ENCODE measurements at regions of chr3 and their contacts with region 1.

Region 1: DNA sequence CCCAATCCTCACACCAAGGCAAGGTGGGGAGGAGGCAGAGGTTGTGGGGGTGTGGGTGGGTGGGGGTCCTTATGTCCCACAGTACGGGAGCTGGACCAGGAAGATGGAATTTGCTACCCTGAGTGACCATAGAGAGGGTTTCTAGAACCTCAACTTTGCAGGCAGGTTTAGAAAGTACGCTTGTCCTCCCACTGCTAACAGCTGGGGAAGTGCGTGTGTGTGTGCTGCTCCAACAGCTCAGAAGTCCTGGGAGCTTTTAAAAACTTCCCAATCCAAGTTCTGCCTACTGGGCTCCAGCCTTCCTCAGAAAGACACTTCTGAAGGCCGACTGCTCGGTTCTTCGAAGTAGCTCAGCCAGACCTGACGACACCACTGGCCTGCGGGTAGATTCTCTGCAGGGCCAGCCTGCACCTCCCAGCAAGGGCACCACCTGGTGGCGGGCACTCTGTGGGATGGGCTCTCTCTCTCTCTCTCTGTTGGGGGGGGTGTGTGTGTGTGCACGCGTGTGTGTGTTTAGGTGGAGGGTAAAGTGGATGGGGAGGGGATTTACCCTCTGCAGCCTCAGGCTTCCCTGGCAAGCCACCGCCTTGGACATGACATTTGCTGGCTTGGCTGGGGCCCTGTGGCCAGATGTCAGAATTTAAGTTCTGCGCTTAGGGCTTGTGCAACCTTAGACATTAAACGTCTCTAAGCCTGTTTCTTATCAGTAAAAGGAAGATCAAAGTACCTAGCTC is 15.6 kb downstream of the TMEM158 start:
- DNase-seq: peak; percentile 79
- H3K4me3 Mint-ChIP-seq: no peak overlapping the region
- H3K27ac Mint-ChIP-seq: no peak overlapping the region
- H3K4me1 Mint-ChIP-seq: peaks cover 14% of the 10 kb centered on the region
- H3K27me3 Mint-ChIP-seq: no peaks in the 10 kb centered on the region
- CTCF ChIP-seq: peak; percentile 91

Region 2: DNA sequence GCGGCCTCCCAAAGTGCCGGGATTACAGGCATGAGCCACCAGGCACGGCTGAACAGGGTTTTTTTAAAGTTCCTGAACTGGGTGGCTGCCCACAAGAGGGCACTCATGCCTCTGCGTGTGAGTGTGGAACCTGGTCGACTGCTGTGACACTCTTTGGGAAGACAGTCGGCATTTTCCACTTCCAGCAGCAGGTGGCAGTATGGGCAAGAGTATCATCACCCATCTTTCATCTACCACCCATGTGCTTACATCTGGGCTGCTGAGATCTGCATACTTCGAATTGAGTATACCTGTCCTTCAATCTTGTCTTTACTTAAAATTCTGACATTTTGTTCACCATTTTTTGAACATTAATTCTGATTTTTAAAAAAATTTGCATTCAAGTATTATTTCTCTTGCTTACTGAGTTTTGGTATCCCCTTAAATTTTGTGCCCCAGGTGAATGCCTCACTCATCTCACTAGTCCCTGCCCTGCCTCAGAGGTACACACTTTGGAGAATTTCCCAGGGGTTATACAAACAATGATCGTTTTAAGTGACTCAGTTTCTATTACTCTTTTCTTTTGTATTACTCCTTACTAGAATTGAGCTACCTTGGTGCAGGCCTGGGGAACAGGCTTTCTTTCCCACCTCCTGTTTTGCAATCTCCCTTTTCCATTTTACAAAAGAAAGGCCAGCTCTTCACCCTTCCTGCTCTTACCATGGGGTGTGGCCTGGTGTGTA is 172.6 kb before region 1 on chr3:
- CTCF ChIA-PET with region 1: interaction called, 368 read pairs
- POLR2A ChIA-PET with region 1: interaction called, 23 read pairs
- intact Hi-C with region 1: loop called (anchors 1 kb)
- DNase-seq: peak; percentile 97
- H3K4me3 Mint-ChIP-seq: no peak overlapping the region
- H3K27ac Mint-ChIP-seq: no peak overlapping the region
- H3K4me1 Mint-ChIP-seq: peaks cover 4% of the 10 kb centered on the region
- H3K27me3 Mint-ChIP-seq: no peaks in the 10 kb centered on the region
- CTCF ChIP-seq: peak; percentile 82

Region 3: GRCh38 chr3:45078910-45079522 is 131.5 kb before region 1 on chr3:
- CTCF ChIA-PET with region 1: interaction called, 10 read pairs
- POLR2A ChIA-PET with region 1: interaction called, 4 read pairs
- intact Hi-C with region 1: no loop called
- DNase-seq: peak; percentile 75
- H3K4me3 Mint-ChIP-seq: no peak overlapping the region
- H3K27ac Mint-ChIP-seq: peak overlapping the region; percentile 16
- H3K4me1 Mint-ChIP-seq: peaks cover 6% of the 10 kb centered on the region
- H3K27me3 Mint-ChIP-seq: no peaks in the 10 kb centered on the region
- CTCF ChIP-seq: peak; percentile 40

Region 4: DNA sequence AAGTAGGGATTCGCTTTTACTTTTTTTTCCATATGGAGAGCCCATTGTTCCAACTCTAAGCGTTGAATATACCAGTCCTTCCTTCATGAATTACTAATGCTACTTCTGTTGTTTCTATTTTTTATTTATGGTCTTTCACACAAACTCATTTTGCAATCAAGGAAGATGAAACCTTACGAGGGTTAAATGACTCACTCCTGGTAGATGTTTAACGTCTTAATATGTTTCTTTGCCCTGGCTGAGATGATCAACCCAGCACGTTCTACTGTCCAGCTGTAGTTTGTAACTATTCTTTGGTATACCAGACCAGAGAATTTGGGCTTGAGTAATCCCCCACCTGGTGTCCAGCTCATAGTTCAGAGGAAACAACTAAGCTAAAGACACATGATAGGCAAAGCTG is 87.4 kb before region 1 on chr3:
- CTCF ChIA-PET with region 1: interaction called, 30 read pairs
- POLR2A ChIA-PET with region 1: interaction called, 10 read pairs
- intact Hi-C with region 1: loop called (anchors 2 kb)
- DNase-seq: peak; percentile 91
- H3K4me3 Mint-ChIP-seq: peak overlapping the region; percentile 19
- H3K27ac Mint-ChIP-seq: peak overlapping the region; percentile 80
- H3K4me1 Mint-ChIP-seq: peaks cover 64% of the 10 kb centered on the region
- H3K27me3 Mint-ChIP-seq: no peaks in the 10 kb centered on the region
- CTCF ChIP-seq: no peak

Region 5: DNA sequence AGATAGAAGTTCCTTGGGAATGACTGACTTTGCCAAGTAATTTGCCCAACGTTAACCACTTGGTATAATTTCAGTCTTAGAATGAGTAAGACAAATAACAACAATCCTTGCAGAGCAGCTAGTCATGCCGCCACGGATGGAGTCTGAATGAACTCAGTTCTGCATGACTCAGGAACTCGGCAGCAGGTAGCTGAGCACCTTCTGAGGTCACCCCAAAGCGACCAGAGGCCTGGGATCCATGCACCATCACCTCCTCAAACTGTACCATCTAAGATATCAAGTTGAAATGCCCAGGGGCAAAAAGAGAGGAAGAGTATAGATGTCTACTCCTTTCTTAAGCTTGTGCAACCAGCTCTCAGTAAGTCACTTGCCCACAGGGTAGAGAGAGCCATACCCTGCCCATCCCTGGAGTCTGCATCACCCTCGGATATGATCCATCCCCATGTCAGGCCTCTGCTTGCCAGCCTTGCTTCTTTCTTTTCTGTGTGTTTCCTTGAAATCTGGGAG is 55.8 kb before region 1 on chr3:
- CTCF ChIA-PET with region 1: interaction called, 10 read pairs
- POLR2A ChIA-PET with region 1: no interaction called
- intact Hi-C with region 1: no loop called
- DNase-seq: peak; percentile 75
- H3K4me3 Mint-ChIP-seq: no peak overlapping the region
- H3K27ac Mint-ChIP-seq: peak overlapping the region; percentile 63
- H3K4me1 Mint-ChIP-seq: peaks cover 12% of the 10 kb centered on the region
- H3K27me3 Mint-ChIP-seq: no peaks in the 10 kb centered on the region
- CTCF ChIP-seq: no peak

Region 6: DNA sequence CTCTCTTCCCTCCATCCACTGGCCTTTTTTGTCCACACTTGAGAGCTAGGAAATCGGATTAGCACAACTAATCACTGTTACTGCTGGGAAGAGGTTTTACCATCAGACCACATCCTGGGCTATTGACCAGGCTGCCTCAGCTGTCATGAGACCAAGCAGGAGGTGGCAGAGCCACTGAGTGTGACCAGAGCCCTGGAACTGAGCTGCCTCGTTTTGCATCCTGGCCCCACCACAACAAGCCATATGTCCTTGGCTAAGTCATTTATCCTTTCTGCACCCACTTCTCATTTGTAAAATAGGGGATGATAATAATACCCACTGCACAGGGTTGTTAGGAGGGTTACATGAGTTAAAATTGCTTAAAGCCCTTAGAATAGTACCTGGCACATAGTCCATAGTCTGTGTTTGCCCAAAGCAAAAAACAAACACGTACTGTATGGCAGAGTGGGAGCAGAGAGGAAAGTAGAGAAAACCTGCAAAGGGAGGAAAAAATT is 18.5 kb before region 1 on chr3:
- CTCF ChIA-PET with region 1: interaction called, 12 read pairs
- POLR2A ChIA-PET with region 1: no interaction called
- intact Hi-C with region 1: no loop called
- DNase-seq: no peak
- H3K4me3 Mint-ChIP-seq: no peak overlapping the region
- H3K27ac Mint-ChIP-seq: no peak overlapping the region
- H3K4me1 Mint-ChIP-seq: peaks cover 6% of the 10 kb centered on the region
- H3K27me3 Mint-ChIP-seq: no peaks in the 10 kb centered on the region
- CTCF ChIP-seq: no peak

Region 7: GRCh38 chr3:45437383-45437782 is 226.9 kb after region 1 on chr3:
- CTCF ChIA-PET with region 1: no interaction called
- POLR2A ChIA-PET with region 1: no interaction called
- intact Hi-C with region 1: no loop called
- DNase-seq: no peak
- H3K4me3 Mint-ChIP-seq: no peak overlapping the region
- H3K27ac Mint-ChIP-seq: no peak overlapping the region
- H3K4me1 Mint-ChIP-seq: no peaks in the 10 kb centered on the region
- H3K27me3 Mint-ChIP-seq: no peaks in the 10 kb centered on the region
- CTCF ChIP-seq: no peak

Measured in MCF 10A (cell line).